GM12878 (cell line): ENCODE measurements at regions of chr16 and their contacts with region 1.

Region 1: GRCh38 chr16:69471121-69471520 is 46.7 kb downstream of the CYB5B start:
- DNase-seq: no peak
- ATAC-seq: peak; percentile 53
- H3K4me3 ChIP-seq: no peak overlapping the region
- H3K27ac ChIP-seq: peak overlapping the region; percentile 67; the same call in 1 of the 2 replicates
- H3K4me1 ChIP-seq: peaks cover 50% of the 10 kb centered on the region
- H3K27me3 ChIP-seq: no peaks in the 10 kb centered on the region
- CTCF ChIP-seq: no peak
- EP300 ChIP-seq: no peak
- POLR2A ChIP-seq: no peak
- RAD21 ChIP-seq: no peak

Region 2: GRCh38 chr16:69223882-69224281 is 247.2 kb before region 1 on chr16:
- CTCF ChIA-PET with region 1: no interaction called
- POLR2A ChIA-PET with region 1: no interaction called
- RAD21 ChIA-PET with region 1: no interaction called
- SMC1A ChIA-PET with region 1: no interaction called
- in situ Hi-C with region 1: no loop called
- intact Hi-C with region 1: no loop called
- DNase-seq: no peak
- ATAC-seq: no peak
- H3K4me3 ChIP-seq: no peak overlapping the region
- H3K27ac ChIP-seq: no peak overlapping the region
- H3K4me1 ChIP-seq: no peaks in the 10 kb centered on the region
- H3K27me3 ChIP-seq: no peaks in the 10 kb centered on the region
- CTCF ChIP-seq: no peak
- EP300 ChIP-seq: no peak
- POLR2A ChIP-seq: no peak
- RAD21 ChIP-seq: no peak

Region 3: DNA sequence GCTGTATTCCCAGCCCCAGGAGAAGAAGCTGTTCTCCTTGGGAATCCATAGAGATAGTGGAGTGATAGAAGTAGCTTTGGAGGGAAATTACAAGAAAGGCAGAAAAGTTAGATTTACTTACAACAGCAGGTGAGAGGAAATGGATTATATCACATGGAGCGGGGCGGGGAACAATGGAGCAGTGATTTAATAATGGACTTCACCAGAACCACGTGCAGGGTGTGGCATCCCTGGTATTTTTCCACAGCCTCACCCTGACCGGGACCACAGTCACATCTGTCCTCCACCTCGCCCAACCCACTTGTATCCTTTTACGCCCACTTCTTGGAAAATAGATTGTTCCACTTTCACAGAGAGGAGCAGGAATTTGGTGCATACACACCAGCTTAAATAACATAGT is 62.7 kb before region 1 on chr16:
- CTCF ChIA-PET with region 1: no interaction called
- POLR2A ChIA-PET with region 1: interaction called, 10 read pairs
- RAD21 ChIA-PET with region 1: interaction called, 3 read pairs
- SMC1A ChIA-PET with region 1: no interaction called
- in situ Hi-C with region 1: no loop called
- intact Hi-C with region 1: no loop called
- DNase-seq: no peak
- ATAC-seq: no peak
- H3K4me3 ChIP-seq: no peak overlapping the region
- H3K27ac ChIP-seq: no peak overlapping the region
- H3K4me1 ChIP-seq: no peaks in the 10 kb centered on the region
- H3K27me3 ChIP-seq: no peaks in the 10 kb centered on the region
- CTCF ChIP-seq: no peak
- EP300 ChIP-seq: no peak
- POLR2A ChIP-seq: no peak
- RAD21 ChIP-seq: no peak